ENCODE measurements at regions of chr4 and their contacts with region 1.

Region 1: DNA sequence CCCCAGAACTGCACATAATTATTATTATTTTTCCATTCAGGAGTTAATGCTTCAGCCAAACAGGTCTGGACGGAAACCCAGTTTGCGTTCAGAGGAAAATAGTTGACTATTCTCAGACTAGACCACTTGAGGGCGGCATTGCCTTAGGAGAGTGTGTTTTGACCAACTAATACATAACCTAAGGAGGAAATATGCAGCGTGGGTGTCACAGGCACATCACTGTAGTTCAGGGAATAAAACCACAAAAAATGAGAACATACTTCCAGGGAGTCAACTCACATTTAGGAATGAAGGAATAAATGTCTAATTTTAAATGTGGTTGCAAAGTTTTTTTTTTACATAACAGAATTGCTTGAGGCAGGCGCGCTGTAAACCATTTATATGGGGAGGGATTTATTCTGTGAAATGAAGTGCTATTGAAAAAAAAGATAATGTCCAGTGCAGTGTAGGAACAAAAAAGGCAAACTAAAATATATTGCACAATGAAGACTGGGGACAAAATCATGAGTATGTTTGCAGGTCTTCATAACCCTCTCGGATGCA is 93.3 kb downstream of the SYNPO2 start:
- DNase-seq: peak; percentile 79
- H3K4me3 ChIP-seq: no peak overlapping the region
- H3K27ac ChIP-seq: no peak overlapping the region
- H3K4me1 ChIP-seq: peaks cover 23% of the 10 kb centered on the region
- H3K27me3 ChIP-seq: no peaks in the 10 kb centered on the region
- CTCF ChIP-seq: peak; percentile 74 to 77

Region 2: DNA sequence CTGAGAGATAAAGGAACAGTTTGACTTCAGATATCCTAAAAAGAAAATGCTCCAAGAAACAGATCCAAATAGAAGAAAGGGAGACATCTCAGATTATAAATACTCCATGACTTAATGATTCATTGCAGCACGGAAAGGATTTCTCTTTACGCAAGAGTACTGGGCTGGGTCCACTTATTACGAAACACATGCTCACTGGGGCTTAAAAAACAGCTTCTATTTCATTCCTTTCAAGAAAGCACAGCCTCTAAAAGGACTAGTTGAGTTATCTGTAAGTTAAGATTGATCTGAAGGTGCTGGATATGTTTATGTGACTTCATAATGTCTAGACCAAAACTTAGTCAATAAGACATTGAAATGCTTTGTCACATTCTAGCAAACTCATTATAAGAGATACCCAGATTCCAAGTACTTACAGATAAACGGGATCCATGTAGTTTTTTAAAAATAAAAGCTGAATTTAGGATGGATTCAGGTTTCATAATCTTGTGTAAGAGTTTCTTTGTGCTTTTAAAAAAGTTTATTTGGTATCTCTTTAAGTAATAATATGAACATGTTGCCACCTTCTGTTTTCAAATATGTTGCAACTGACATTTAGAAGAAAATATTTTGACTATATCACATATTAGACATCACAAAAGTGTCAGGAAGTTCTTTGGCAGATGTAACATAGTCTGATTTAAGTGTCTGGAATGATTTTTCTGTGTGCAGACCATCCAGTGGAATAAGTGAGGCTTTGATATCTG is 44.2 kb after region 1 on chr4:
- CTCF ChIA-PET with region 1: no interaction called
- dilution Hi-C with region 1: loop called (anchors 5 kb)
- in situ Hi-C with region 1: no loop called
- intact Hi-C with region 1: loop called (anchors 1 kb)
- DNase-seq: peak; percentile 84
- H3K4me3 ChIP-seq: peak overlapping the region in 2 of 3 experiments; percentile 26 to 41
- H3K27ac ChIP-seq: peak overlapping the region; percentile 99
- H3K4me1 ChIP-seq: peaks cover 21% of the 10 kb centered on the region
- H3K27me3 ChIP-seq: no peaks in the 10 kb centered on the region
- CTCF ChIP-seq: no peak

Region 3: GRCh38 chr4:119087121-119087520 is 105.2 kb after region 1 on chr4:
- CTCF ChIA-PET with region 1: no interaction called
- dilution Hi-C with region 1: no loop called
- in situ Hi-C with region 1: no loop called
- intact Hi-C with region 1: loop called (anchors 1 kb)
- DNase-seq: no peak
- H3K4me3 ChIP-seq: no peak overlapping the region
- H3K27ac ChIP-seq: no peak overlapping the region
- H3K4me1 ChIP-seq: no peaks in the 10 kb centered on the region
- H3K27me3 ChIP-seq: no peaks in the 10 kb centered on the region
- CTCF ChIP-seq: peak; percentile 30 to 40

Region 4: GRCh38 chr4:119233750-119234149 is 251.8 kb after region 1 on chr4:
- CTCF ChIA-PET with region 1: no interaction called
- dilution Hi-C with region 1: no loop called
- in situ Hi-C with region 1: no loop called
- intact Hi-C with region 1: loop called (anchors 2 kb)
- DNase-seq: no peak
- H3K4me3 ChIP-seq: no peak overlapping the region
- H3K27ac ChIP-seq: no peak overlapping the region
- H3K4me1 ChIP-seq: peaks cover 10% of the 10 kb centered on the region
- H3K27me3 ChIP-seq: no peaks in the 10 kb centered on the region
- CTCF ChIP-seq: no peak

Region 5: DNA sequence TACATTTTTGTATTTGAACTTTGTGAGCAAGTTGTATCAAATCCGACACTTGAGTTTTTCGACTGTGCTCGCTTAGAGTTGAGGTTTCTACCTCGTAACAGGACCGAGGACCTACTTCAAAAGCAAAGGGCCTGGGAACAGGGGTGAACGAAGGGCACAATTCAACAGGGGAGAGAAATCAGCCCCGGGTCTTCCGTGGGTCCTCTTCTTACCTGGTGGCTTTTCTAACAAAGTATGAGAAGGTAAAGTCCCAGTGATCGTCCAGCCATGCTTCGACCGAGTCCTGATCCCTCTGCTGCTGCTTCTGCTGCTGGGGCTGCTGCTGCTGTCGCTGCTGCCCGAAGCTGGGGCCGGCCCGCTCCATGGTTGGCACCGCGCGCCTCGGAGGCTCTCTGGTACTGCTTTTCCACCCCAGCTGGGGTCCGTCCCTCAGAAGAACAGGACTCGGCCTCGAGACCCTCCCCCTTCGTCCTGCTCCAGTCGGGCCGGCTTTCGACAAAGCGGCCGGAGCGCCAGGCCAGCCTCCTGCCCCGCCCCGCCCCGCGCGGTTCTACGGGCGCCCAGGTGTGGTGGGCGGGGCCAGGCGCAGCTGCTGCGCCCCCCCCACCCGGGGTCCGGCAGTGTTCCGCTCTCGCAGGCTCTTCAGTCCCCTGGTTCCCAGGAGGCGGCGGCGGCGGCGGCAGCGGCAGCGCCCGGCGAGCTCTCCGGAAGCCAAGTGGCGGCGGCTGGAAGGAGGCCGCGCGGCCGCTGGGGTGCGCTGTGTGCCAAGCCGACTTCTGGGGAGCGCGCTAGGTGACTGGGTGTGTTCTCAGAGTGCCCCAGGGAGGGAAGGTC is 646.6 kb after region 1 on chr4 and contains the start of gene PDE5A:
- CTCF ChIA-PET with region 1: no interaction called
- dilution Hi-C with region 1: no loop called
- in situ Hi-C with region 1: no loop called
- intact Hi-C with region 1: loop called (anchors 1 kb)
- DNase-seq: peak; percentile 87
- H3K4me3 ChIP-seq: peak within 1 kb of the TSS; percentile 72 to 85 (median 81)
- H3K27ac ChIP-seq: no peak within 1 kb of the TSS
- H3K4me1 ChIP-seq: peaks cover 12% of the 10 kb centered on the region
- H3K27me3 ChIP-seq: no peaks in the 10 kb centered on the region
- CTCF ChIP-seq: peak; percentile 56 to 64
- total RNA-seq, gene PDE5A: 4.3 to 17.3 TPM

Region 6: GRCh38 chr4:120056246-120056645 is 1074.3 kb after region 1 on chr4:
- CTCF ChIA-PET with region 1: no interaction called
- dilution Hi-C with region 1: no loop called
- in situ Hi-C with region 1: no loop called
- intact Hi-C with region 1: loop called (anchors 2 kb)
- DNase-seq: no peak
- H3K4me3 ChIP-seq: no peak overlapping the region
- H3K27ac ChIP-seq: no peak overlapping the region
- H3K4me1 ChIP-seq: no peaks in the 10 kb centered on the region
- H3K27me3 ChIP-seq: no peaks in the 10 kb centered on the region
- CTCF ChIP-seq: peak; percentile 3 to 23

Measured in mammary epithelial cell (primary cell).